IMR-90 (cell line): ENCODE measurements at regions of chr5 and their contacts with region 1.

Region 1: GRCh38 chr5:140336388-140336787 is 10.0 kb downstream of the HBEGF start:
- DNase-seq: no peak
- ATAC-seq: 0 out of 2 replicates have a peak, but pooled peaks have one; percentile 28
- H3K4me3 ChIP-seq: no peak overlapping the region
- H3K27ac ChIP-seq: no peak overlapping the region
- H3K4me1 ChIP-seq: peaks cover 6% of the 10 kb centered on the region
- H3K27me3 ChIP-seq: no peaks in the 10 kb centered on the region
- CTCF ChIP-seq: no peak
- POLR2A ChIP-seq: no peak
- RAD21 ChIP-seq: no peak

Region 2: GRCh38 chr5:140302786-140303639 is 33.4 kb before region 1 on chr5 and contains the start of gene PFDN1:
- CTCF ChIA-PET with region 1: interaction called, 3 read pairs
- POLR2A ChIA-PET with region 1: interaction called, 13 read pairs
- dilution Hi-C with region 1: no loop called
- in situ Hi-C with region 1: no loop called
- intact Hi-C with region 1: no loop called
- DNase-seq: peak; percentile 94
- ATAC-seq: peak; percentile 98
- H3K4me3 ChIP-seq: peak within 1 kb of the TSS; percentile 81
- H3K27ac ChIP-seq: peak within 1 kb of the TSS; percentile 90
- H3K4me1 ChIP-seq: peaks cover 5% of the 10 kb centered on the region
- H3K27me3 ChIP-seq: no peaks in the 10 kb centered on the region
- CTCF ChIP-seq: no peak
- POLR2A ChIP-seq: peak; percentile 73; the same call in 1 of the 2 replicates
- RAD21 ChIP-seq: no peak
- total RNA-seq, gene PFDN1: 92.8 and 98.8 TPM in 2 replicates